ENCODE measurements at regions of chr21 and their contacts with region 1.

Region 1: GRCh38 chr21:39232861-39233291 is 49.6 kb upstream of the PSMG1 start:
- DNase-seq: no peak
- H3K4me3 ChIP-seq: no peak overlapping the region
- H3K4me3 Mint-ChIP-seq: no peak overlapping the region
- H3K27ac ChIP-seq: no peak overlapping the region
- H3K27ac Mint-ChIP-seq: peak overlapping the region in 2 of 7 donors; percentile 6 to 52
- H3K4me1 ChIP-seq: no peaks in the 10 kb centered on the region
- H3K4me1 Mint-ChIP-seq: peaks cover 9 to 17% (median 13%) of the 10 kb centered on the region in 4 donors
- H3K27me3 ChIP-seq: no peaks in the 10 kb centered on the region
- H3K27me3 Mint-ChIP-seq: no peaks in the 10 kb centered on the region

Region 2: DNA sequence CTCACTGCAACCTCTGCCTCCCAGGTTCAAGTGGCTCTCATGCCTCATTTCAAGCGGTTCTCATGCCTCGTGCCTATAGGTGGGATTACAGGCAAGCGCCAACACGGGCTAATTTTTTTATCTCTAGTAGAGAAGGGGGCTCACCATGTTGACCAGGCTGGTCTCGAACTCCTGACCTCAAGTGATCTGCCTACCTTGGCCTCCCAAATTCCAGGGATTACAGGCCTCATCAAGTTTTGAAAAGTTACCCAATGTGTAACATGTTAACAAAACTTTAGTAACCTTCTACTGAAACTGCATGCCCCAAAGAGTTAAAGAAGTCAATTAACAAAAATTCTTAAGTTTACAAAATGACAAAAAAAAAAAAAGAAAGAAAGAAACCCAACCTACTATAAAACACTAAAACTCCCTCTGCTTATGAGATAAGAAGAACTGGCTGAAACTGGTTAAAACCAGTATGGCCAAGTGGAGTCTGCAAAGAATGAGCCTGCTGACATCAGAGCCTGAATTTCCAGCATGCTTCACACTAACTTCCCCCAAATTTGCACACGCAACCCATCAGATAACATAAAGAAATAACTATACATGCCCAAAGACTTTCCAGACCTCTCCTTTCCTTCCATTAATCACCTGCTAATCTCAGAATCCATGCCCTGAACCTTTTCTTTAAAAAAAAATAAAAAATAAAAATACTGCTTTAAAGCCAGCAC is 24.1 kb before region 1 on chr21:
- CTCF ChIA-PET with region 1: no interaction called
- POLR2A ChIA-PET with region 1: no interaction called
- intact Hi-C with region 1: loop called (anchors 2 kb)
- DNase-seq: peak in 1 of 5 donors; percentile 38
- H3K4me3 ChIP-seq: no peak overlapping the region
- H3K4me3 Mint-ChIP-seq: peak overlapping the region in 1 of 8 donors; percentile 40
- H3K27ac ChIP-seq: no peak overlapping the region
- H3K27ac Mint-ChIP-seq: peak overlapping the region; percentile 4 to 86 (median 62)
- H3K4me1 ChIP-seq: peaks cover 27% of the 10 kb centered on the region
- H3K4me1 Mint-ChIP-seq: peaks cover 26 to 44% (median 34%) of the 10 kb centered on the region in 4 donors
- H3K27me3 ChIP-seq: no peaks in the 10 kb centered on the region
- H3K27me3 Mint-ChIP-seq: no peaks in the 10 kb centered on the region

Region 3: DNA sequence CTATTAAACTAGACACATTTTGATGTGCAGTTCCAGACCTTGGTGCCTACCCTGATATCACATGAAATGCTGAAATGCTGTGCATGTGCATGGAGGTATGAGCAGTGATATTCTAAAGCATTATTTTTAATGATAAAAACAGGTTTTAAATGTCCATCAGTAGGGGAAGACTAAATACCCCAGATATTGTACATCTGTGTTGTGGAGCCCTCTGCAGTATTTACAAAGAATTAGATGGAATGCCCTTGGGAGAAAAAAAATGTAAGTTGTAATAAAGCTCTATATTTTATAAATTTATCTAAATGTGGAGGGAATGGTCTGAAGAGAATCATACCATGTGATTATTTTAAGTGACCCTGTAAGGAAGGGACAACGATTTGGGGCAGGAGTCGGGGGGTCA is 473.0 kb after region 1 on chr21:
- CTCF ChIA-PET with region 1: no interaction called
- POLR2A ChIA-PET with region 1: no interaction called
- intact Hi-C with region 1: no loop called
- DNase-seq: no peak
- H3K4me3 ChIP-seq: no peak overlapping the region
- H3K4me3 Mint-ChIP-seq: no peak overlapping the region
- H3K27ac ChIP-seq: no peak overlapping the region
- H3K27ac Mint-ChIP-seq: no peak overlapping the region
- H3K4me1 ChIP-seq: no peaks in the 10 kb centered on the region
- H3K4me1 Mint-ChIP-seq: no peaks in the 10 kb centered on the region
- H3K27me3 ChIP-seq: no peaks in the 10 kb centered on the region
- H3K27me3 Mint-ChIP-seq: peaks cover 0 to 2% of the 10 kb centered on the region in 2 donors

Measured in CD4-positive, alpha-beta memory T cell (primary cell).